Panc1 (cell line): ENCODE measurements at regions of chr11 and their contacts with region 1.

Region 1: GRCh38 chr11:33790040-33790439 is 15.7 kb upstream of the FBXO3 start:
- DNase-seq: no peak
- ATAC-seq: no peak
- H3K4me3 ChIP-seq: no peak overlapping the region
- H3K27ac ChIP-seq: no peak overlapping the region
- H3K4me1 ChIP-seq: no peaks in the 10 kb centered on the region
- H3K27me3 ChIP-seq: peaks cover 3% of the 10 kb centered on the region; the same call in 1 of the 2 replicates
- CTCF ChIP-seq: no peak

Region 2: DNA sequence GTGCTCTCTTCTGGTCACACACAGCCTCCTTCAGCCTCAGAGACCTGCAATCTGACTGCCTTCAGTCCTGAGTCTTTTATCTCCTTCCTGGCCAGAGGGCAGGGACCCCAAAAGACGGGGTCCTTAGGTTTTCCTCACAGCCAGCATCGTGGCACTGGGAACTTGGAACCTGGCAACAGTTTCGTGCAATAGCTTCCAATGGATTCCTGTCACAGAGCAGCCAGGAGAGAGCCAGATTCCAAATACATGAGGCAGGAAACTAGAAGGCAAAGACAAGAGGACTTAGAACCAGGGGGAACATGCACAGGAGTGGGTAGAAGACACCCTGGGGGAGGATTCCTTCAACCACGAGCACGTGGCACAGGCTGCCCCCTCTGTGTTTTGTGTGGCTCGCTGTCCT is 138.1 kb before region 1 on chr11:
- CTCF ChIA-PET with region 1: no interaction called
- POLR2A ChIA-PET with region 1: interaction called, 12 read pairs
- in situ Hi-C with region 1: no loop called
- intact Hi-C with region 1: no loop called
- DNase-seq: no peak
- ATAC-seq: no peak
- H3K4me3 ChIP-seq: no peak overlapping the region
- H3K27ac ChIP-seq: no peak overlapping the region
- H3K4me1 ChIP-seq: no peaks in the 10 kb centered on the region
- H3K27me3 ChIP-seq: no peaks in the 10 kb centered on the region
- CTCF ChIP-seq: no peak

Region 3: GRCh38 chr11:33742249-33742851 is 47.7 kb before region 1 on chr11:
- CTCF ChIA-PET with region 1: no interaction called
- POLR2A ChIA-PET with region 1: no interaction called
- in situ Hi-C with region 1: no loop called
- intact Hi-C with region 1: no loop called
- DNase-seq: no peak
- ATAC-seq: peak; percentile 82
- H3K4me3 ChIP-seq: no peak overlapping the region
- H3K27ac ChIP-seq: peak overlapping the region; percentile 32; the same call in 1 of the 2 replicates
- H3K4me1 ChIP-seq: peaks cover 15% of the 10 kb centered on the region
- H3K27me3 ChIP-seq: no peaks in the 10 kb centered on the region
- CTCF ChIP-seq: peak; percentile 65

Region 4: GRCh38 chr11:33753304-33753967 is 36.6 kb before region 1 on chr11:
- CTCF ChIA-PET with region 1: interaction called, 11 read pairs
- POLR2A ChIA-PET with region 1: interaction called, 7 read pairs
- in situ Hi-C with region 1: no loop called
- intact Hi-C with region 1: no loop called
- DNase-seq: no peak
- ATAC-seq: no peak
- H3K4me3 ChIP-seq: no peak overlapping the region
- H3K27ac ChIP-seq: no peak overlapping the region
- H3K4me1 ChIP-seq: no peaks in the 10 kb centered on the region
- H3K27me3 ChIP-seq: no peaks in the 10 kb centered on the region
- CTCF ChIP-seq: no peak